Right ventricle myocardium superior (tissue), 1 donor: ENCODE measurements at regions of chr19 and their contacts with region 1.

Region 1: GRCh38 chr19:34345947-34346351 is 19.0 kb upstream of the GPI start:
- DNase-seq: peak; percentile 69
- ATAC-seq: peak; percentile 81

Region 2: DNA sequence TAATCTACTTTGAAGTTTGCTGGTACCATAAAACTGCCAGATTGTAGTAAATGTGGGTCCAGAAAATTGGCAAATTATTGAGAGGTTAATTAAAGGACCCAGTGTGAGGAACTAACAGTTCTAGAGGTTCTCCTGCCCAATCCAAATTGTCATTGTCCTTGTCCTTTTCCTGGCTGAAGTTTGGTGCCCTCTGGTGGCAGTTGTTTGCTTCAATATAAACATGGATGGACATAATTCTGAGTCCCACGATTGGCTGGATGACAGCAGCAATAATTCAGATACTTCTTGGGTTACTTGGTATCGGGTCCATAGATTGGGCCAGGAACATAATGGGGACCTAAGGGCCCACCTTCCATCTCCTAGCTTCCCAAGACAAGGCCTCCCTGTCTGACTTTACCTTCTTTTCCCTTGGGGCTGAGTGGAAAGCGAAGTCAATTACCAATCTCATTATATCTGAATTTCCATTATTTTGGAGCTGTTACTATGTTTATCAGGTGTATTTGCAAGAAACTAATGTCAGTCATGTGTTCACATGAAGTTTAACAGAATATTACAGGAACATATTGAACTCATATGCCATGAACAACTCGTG is 125.4 kb before region 1 on chr19:
- intact Hi-C with region 1: loop called (anchors 10 kb)
- DNase-seq: no peak
- ATAC-seq: peak; percentile 66

Region 3: DNA sequence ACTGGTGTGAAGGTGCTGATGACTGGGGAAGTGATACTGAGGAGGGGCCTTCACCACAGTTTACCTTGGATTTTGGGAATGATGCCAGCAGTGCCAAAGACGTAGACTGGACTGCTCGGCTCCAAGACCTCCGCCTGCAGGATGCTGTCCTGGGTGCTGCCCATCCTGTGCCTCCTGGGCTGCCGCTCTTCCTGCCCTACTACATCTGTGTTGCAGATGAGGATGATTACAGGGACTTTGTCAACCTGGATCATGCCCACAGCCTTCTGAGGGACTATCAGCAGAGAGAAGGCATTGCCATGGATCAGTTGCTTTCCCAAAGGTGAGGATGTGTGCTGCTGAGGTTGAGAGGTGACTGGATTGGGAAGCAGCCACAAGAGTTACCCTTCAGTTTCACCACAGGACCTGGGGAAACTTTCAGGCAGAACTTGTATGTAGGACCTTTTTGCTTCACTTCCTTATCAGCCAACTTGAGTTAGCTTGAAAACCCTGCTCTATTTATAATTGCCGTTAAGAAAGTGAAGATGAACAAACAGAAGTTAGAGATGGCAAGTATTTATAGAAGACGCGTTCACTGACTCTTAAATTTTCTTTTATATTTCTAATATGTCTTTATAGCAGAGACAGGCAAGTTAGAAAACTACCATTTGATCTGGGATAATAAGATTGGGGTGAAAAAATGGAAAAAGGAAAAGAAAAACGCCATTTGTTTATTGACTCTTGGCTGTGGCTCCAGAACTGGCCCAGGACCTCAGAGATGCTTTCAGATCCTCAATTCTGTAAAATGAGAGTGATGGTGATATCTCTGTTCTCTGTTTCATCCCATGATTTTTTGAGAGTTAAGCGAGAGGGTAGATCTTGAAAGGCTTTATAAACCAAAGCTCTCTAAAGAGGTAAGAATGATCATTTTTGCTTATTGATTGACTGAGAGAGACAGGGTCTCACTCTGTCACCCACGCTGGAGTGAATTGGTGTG is 63.5 kb after region 1 on chr19:
- intact Hi-C with region 1: no loop called
- DNase-seq: no peak
- ATAC-seq: no peak